Spleen (tissue), 13 donors: ENCODE measurements at regions of chr11 and their contacts with region 1.

Region 1: GRCh38 chr11:65779851-65780577 is 762 bp downstream of the AP5B1 start:
- DNase-seq: peak; percentile 96
- H3K4me3 ChIP-seq: peak overlapping the region; percentile 60 to 99 (median 86)
- H3K27ac ChIP-seq: peak overlapping the region; percentile 38 to 97 (median 90)
- H3K4me1 ChIP-seq: peaks cover 9 to 61% (median 43%) of the 10 kb centered on the region in 6 donors
- H3K27me3 ChIP-seq: peaks cover 0 to 4% (median 0%) of the 10 kb centered on the region in 7 donors
- CTCF ChIP-seq: peak; percentile 90 to 99 (median 98)
- POLR2A ChIP-seq: no peak

Region 2: GRCh38 chr11:65720237-65720934 is 59.6 kb before region 1 on chr11 and contains the start of gene RNASEH2C:
- intact Hi-C with region 1: loop called (anchors 10 kb)
- DNase-seq: peak; percentile 95
- H3K4me3 ChIP-seq: peak within 1 kb of the TSS; percentile 67 to 95 (median 85)
- H3K27ac ChIP-seq: peak within 1 kb of the TSS; percentile 84 to 97 (median 93)
- H3K4me1 ChIP-seq: peaks cover 15 to 44% (median 29%) of the 10 kb centered on the region in 6 donors
- H3K27me3 ChIP-seq: no peaks in the 10 kb centered on the region
- CTCF ChIP-seq: peak in 3 of 11 experiments; percentile 18 to 33 (median 30)
- POLR2A ChIP-seq: peak in 2 of 3 donors; percentile 60 to 84
- total RNA-seq, gene RNASEH2C: 51.0 to 141 (median 54.4) TPM

Region 3: GRCh38 chr11:65859200-65859811 is 79.3 kb after region 1 on chr11:
- intact Hi-C with region 1: no loop called
- DNase-seq: peak; percentile 100
- H3K4me3 ChIP-seq: peak overlapping the region; percentile 86 to 100 (median 99)
- H3K27ac ChIP-seq: peak overlapping the region; percentile 93 to 99 (median 97)
- H3K4me1 ChIP-seq: peaks cover 38 to 82% (median 70%) of the 10 kb centered on the region in 6 donors
- H3K27me3 ChIP-seq: no peaks in the 10 kb centered on the region
- CTCF ChIP-seq: peak in 4 of 11 experiments; percentile 8 to 41 (median 30)
- POLR2A ChIP-seq: peak in 2 of 3 donors; percentile 48 to 91